Activated CD4-positive, alpha-beta T cell treated with anti-CD3 and anti-CD28 coated beads, Interleukin-2, amount 10 ng/mL, durations not matched to agents 24 days and 14 days (primary cell): ENCODE measurements at regions of chr19 and their contacts with region 1.

Region 1: GRCh38 chr19:57240311-57241090 is at the start of gene ZNF805:
- DNase-seq: peak; percentile 98
- H3K4me3 Mint-ChIP-seq: peak within 1 kb of the TSS; percentile 87
- H3K27ac Mint-ChIP-seq: peak within 1 kb of the TSS; percentile 95
- H3K4me1 Mint-ChIP-seq: peaks cover 21% of the 10 kb centered on the region
- H3K27me3 Mint-ChIP-seq: peaks cover 2% of the 10 kb centered on the region
- total RNA-seq, gene ZNF805: 7.6 and 8.6 TPM in 2 replicates

Region 2: GRCh38 chr19:56838909-56839651 is 401.4 kb before region 1 on chr19:
- intact Hi-C with region 1: no loop called
- DNase-seq: no peak
- H3K4me3 Mint-ChIP-seq: no peak overlapping the region
- H3K27ac Mint-ChIP-seq: no peak overlapping the region
- H3K4me1 Mint-ChIP-seq: no peaks in the 10 kb centered on the region
- H3K27me3 Mint-ChIP-seq: no peaks in the 10 kb centered on the region

Region 3: GRCh38 chr19:57152921-57153320 is 87.6 kb before region 1 on chr19:
- intact Hi-C with region 1: no loop called
- DNase-seq: no peak
- H3K4me3 Mint-ChIP-seq: no peak overlapping the region
- H3K27ac Mint-ChIP-seq: no peak overlapping the region
- H3K4me1 Mint-ChIP-seq: no peaks in the 10 kb centered on the region
- H3K27me3 Mint-ChIP-seq: no peaks in the 10 kb centered on the region

Region 4: DNA sequence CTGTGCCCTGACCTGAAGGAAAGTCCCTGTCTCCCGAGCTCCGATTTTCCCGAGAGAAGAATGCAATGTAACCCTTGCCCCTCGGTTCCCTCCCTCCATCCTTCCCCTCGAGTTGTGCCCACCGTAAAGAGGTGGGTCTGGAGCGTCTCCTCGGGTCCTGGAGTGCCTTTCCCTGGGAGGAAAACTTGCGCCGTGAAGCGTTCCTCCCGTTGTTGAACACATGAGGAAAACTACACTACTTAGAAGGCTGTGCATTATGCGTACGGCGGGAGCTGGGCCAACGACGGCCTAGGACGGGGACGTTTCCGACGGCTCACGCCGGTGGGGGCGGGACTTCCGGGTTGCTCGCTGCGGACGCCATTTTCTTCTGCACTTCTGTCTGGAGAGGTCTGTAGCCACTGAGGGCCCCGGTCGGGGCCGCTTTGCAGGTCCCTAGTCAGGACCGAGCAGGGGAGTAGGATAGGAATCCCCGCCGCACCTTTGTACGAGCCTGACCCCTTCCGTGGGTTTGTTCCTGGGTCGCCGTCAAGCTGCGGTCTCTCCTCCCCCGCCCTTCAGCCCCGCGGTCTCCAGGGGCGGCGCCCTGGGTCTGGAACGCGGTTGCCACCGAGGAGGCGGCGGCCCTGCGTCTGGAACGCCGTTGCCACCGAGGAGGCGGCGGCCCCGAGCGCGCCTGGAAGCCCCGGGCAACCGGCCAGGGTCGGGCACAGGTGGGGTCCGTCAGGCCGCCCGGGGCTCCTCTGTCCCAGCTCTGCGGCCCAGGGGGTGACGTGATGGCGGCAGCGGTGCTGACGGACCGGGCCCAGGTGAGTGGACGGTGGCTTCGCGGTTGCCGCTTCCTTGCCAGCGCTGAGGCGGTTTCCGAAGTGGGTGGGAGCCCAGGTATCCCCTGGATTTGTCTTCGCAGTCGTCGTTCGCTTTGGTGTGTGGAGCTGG is 49.1 kb before region 1 on chr19 and contains the start of gene ZNF264:
- intact Hi-C with region 1: loop called (anchors 1 kb)
- DNase-seq: peak; percentile 97
- H3K4me3 Mint-ChIP-seq: peak within 1 kb of the TSS; percentile 93
- H3K27ac Mint-ChIP-seq: peak within 1 kb of the TSS; percentile 85
- H3K4me1 Mint-ChIP-seq: peaks cover 20% of the 10 kb centered on the region
- H3K27me3 Mint-ChIP-seq: no peaks in the 10 kb centered on the region
- total RNA-seq, gene ZNF264: 18.0 and 19.9 TPM in 2 replicates

Region 5: DNA sequence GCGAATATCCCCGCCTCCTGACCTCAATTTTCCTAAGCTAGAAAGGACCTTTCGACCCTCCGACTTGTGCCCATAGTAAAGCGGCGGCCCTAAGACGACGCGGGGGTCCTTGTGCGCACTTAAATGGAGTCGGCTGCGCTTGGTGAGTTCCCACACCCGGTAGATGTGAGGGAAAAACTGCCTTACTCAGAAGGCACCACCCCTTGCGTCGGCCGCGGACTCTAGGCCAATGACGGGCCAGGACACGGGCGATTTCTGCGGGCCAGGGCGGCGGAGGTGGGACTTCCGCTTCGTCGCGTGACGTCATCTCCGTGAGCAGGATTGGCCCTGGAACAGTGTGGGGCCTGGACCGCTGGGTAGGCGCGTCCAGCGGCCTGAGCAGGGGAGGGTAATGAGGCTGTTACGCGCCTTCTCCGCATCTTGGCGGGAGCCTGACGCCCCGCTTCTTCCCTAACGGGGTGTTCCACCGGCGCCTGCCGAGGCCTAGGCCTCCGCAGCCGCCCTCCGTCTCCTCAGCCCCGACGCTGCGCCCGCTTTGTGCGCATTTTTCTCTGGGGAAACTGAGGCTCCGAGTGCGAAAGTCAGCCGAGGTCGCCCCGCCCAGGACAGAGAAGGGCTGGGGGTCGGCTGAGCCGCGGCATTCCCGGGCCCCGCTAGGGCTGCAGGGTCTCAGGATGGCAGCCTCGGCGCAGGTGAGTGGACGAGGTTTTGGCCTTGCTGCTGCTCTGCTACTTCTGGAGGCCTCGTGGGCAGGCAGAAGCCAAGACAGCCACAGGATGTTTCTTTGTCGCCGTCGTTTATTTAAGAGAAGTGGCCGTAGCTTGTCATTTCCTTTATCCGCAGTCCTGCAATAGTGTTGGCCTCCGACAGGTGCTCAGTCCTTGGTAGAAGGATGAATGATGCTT is 79.9 kb after region 1 on chr19 and contains the start of gene ZNF543:
- intact Hi-C with region 1: loop called (anchors 1 kb)
- DNase-seq: peak; percentile 98
- H3K4me3 Mint-ChIP-seq: peak within 1 kb of the TSS; percentile 95
- H3K27ac Mint-ChIP-seq: peak within 1 kb of the TSS; percentile 94
- H3K4me1 Mint-ChIP-seq: peaks cover 24% of the 10 kb centered on the region
- H3K27me3 Mint-ChIP-seq: peaks cover 14% of the 10 kb centered on the region
- total RNA-seq, gene ZNF543: 4.9 and 5.3 TPM in 2 replicates

Region 6: GRCh38 chr19:57350877-57351805 is 110.6 kb after region 1 on chr19 and contains the start of gene ZNF304:
- intact Hi-C with region 1: loop called (anchors 1 kb)
- DNase-seq: peak; percentile 96
- H3K4me3 Mint-ChIP-seq: peak within 1 kb of the TSS; percentile 93
- H3K27ac Mint-ChIP-seq: peak within 1 kb of the TSS; percentile 91
- H3K4me1 Mint-ChIP-seq: peaks cover 29% of the 10 kb centered on the region
- H3K27me3 Mint-ChIP-seq: no peaks in the 10 kb centered on the region
- total RNA-seq, gene ZNF304: 5.3 and 5.8 TPM in 2 replicates